ENCODE measurements at regions of chr11 and their contacts with region 1.

Region 1: DNA sequence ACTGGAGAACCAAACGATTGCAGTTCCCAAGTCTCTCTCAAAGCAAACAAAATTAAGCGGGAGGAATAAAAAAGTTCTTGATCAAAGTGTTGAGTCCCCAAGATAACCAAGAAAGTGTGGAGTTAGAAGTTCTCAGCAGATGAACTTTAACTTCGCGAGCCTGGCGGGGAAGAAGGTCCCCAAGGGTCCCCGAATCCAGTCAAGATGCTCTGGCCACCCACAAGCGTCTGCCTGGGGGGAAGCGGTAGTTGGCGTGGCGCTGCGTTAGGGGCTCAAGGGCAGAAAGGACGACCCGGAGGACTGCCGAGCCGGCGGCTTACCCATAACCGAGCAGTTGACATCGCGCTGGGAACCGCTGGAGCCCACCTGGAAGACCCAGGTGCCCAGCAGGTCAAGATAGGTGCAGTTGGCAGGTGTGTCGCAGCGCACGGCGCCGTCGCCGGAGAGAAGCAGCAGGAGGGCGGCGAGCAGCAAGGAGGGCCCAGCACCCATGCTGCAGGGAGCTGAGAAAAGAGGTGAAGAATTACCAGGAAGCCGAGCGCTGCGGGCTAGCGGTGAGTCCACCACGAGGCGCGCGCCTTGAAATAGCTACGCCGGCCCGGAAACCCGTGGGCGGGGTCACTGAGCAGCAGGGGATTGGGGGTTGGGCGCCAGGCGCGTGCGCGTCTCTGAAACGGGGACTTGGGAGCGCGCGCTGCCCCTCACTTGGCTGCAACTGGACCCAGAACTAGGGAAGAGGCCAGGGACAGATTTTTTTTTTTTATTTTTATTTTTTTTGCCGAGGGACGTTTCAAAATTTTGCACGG is at the start of gene CTSC:
- DNase-seq: peak; percentile 94 to 95
- ATAC-seq: peak; percentile 75 to 93 (median 84)
- H3K4me3 ChIP-seq: peak within 1 kb of the TSS; percentile 97
- H3K4me3 Mint-ChIP-seq: peak within 1 kb of the TSS; percentile 89
- H3K27ac ChIP-seq: peak within 1 kb of the TSS; percentile 75
- H3K27ac Mint-ChIP-seq: peak within 1 kb of the TSS; percentile 98 to 100
- H3K4me1 ChIP-seq: peaks cover 22% of the 10 kb centered on the region
- H3K4me1 Mint-ChIP-seq: peaks cover 77 to 80% of the 10 kb centered on the region in 2 donors
- H3K27me3 ChIP-seq: no peaks in the 10 kb centered on the region
- H3K27me3 Mint-ChIP-seq: no peaks in the 10 kb centered on the region
- CTCF ChIP-seq: no peak
- total RNA-seq, gene CTSC: 182 to 275 (median 227) TPM

Region 2: GRCh38 chr11:88301488-88302140 is 35.8 kb before region 1 on chr11:
- intact Hi-C with region 1: loop called (anchors 1 kb)
- DNase-seq: peak; percentile 36 to 68
- ATAC-seq: peak; percentile 70 to 87 (median 85)
- H3K4me3 ChIP-seq: no peak overlapping the region
- H3K4me3 Mint-ChIP-seq: peak overlapping the region; percentile 77
- H3K27ac ChIP-seq: peak overlapping the region; percentile 72
- H3K27ac Mint-ChIP-seq: peak overlapping the region; percentile 93 to 99
- H3K4me1 ChIP-seq: peaks cover 26% of the 10 kb centered on the region
- H3K4me1 Mint-ChIP-seq: peaks cover 86 to 89% of the 10 kb centered on the region in 2 donors
- H3K27me3 ChIP-seq: no peaks in the 10 kb centered on the region
- H3K27me3 Mint-ChIP-seq: no peaks in the 10 kb centered on the region
- CTCF ChIP-seq: no peak

Region 3: DNA sequence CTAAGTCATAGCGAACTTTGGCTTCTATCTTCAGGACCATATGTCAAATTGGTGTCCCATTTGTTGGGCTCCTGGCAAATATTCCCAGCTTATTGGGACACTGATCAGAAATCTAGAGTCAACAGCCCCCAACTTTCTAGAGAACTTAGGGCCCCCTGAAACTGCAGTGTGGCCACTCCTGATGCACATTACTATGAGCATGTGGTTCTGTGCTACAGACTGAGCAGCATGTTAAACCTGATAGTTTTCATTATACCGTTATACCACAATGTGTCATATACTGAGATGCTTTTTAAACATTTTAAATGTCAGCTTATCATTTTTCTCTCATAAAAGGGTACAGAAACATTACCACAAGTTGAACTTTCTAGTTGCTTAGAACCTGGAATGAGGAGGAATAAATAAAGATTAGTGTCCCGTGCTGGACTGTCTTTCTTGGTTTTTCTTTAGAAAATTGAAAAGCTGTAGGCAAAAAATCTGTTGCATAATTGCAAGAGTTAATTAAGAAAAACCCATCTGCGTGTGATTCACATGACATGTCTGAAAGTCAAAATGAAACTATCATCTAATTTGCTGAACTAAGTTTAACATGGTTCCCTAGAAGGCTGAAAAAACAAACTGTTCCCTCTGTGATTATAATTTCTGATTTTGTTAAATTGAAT is 16.6 kb after region 1 on chr11:
- intact Hi-C with region 1: loop called (anchors 2 kb)
- DNase-seq: peak in 1 of 2 donors; percentile 32
- ATAC-seq: peak; percentile 64 to 86 (median 79)
- H3K4me3 ChIP-seq: no peak overlapping the region
- H3K4me3 Mint-ChIP-seq: no peak overlapping the region
- H3K27ac ChIP-seq: peak overlapping the region; percentile 53
- H3K27ac Mint-ChIP-seq: peak overlapping the region; percentile 5 to 67
- H3K4me1 ChIP-seq: peaks cover 5% of the 10 kb centered on the region
- H3K4me1 Mint-ChIP-seq: peaks cover 25 to 42% of the 10 kb centered on the region in 2 donors
- H3K27me3 ChIP-seq: no peaks in the 10 kb centered on the region
- H3K27me3 Mint-ChIP-seq: no peaks in the 10 kb centered on the region
- CTCF ChIP-seq: no peak

Region 4: DNA sequence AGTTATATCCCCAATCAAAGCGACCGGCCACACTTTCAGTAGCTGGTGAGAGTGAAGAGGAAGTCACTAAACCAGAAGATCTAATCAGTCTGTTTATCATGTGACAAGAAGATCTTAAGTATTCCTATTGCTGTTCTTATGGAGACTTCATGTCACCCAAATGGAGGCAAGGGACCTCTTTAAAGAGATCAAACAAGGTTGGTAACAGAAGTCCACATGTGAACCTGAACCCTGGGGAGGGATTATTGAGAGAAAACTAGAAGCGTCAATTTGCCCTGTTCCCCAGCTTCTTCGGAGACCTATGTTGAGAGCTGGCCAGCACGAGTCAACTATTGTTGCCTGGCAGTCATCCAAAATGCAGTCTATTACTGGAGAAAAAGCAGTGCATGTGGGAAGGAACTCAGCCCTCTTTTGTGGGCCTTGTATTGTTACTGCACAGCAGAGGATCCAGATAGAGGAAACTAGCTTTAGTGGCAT is 77.0 kb after region 1 on chr11:
- intact Hi-C with region 1: loop called (anchors 2 kb)
- DNase-seq: peak in 1 of 2 donors; percentile 63
- ATAC-seq: peak; percentile 46 to 61 (median 59)
- H3K4me3 ChIP-seq: no peak overlapping the region
- H3K4me3 Mint-ChIP-seq: peak overlapping the region; percentile 81
- H3K27ac ChIP-seq: peak overlapping the region; percentile 23
- H3K27ac Mint-ChIP-seq: peak overlapping the region; percentile 80 to 92
- H3K4me1 ChIP-seq: peaks cover 23% of the 10 kb centered on the region
- H3K4me1 Mint-ChIP-seq: peaks cover 61 to 71% of the 10 kb centered on the region in 2 donors
- H3K27me3 ChIP-seq: no peaks in the 10 kb centered on the region
- H3K27me3 Mint-ChIP-seq: no peaks in the 10 kb centered on the region
- CTCF ChIP-seq: no peak